AG04449 (cell line): ENCODE measurements at regions of chr11 and their contacts with region 1.

Region 1: DNA sequence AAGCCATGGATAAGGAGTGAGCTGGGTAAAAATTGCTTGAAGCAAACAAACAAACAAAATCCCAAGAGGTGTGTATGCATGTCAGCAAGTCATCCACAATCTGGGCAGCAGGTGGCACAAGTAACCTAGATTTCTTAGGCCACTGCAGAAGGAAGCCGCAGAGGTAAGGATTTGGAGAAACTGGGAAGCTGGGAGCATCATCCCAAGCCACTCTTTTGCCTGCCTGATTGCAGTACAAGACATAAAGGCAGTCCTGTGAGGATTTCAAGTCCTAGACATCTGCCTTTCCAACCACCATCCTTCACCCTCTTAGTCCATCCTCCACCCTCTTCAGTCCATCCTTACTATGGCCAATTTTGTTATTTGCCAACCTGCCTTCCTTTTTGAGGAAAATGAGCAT is 67.2 kb upstream of the BMAL1 start:
- DNase-seq: peak; percentile 34
- H3K4me3 ChIP-seq: no peak overlapping the region
- CTCF ChIP-seq: peak; percentile 63

Region 2: GRCh38 chr11:13238879-13239514 is 28.6 kb after region 1 on chr11:
- CTCF ChIA-PET with region 1: interaction called, 191 read pairs
- POLR2A ChIA-PET with region 1: no interaction called
- DNase-seq: no peak
- H3K4me3 ChIP-seq: no peak overlapping the region
- CTCF ChIP-seq: peak; percentile 67

Region 3: GRCh38 chr11:13329670-13330356 is 119.4 kb after region 1 on chr11:
- CTCF ChIA-PET with region 1: interaction called, 329 read pairs
- POLR2A ChIA-PET with region 1: no interaction called
- DNase-seq: no peak
- H3K4me3 ChIP-seq: no peak overlapping the region
- CTCF ChIP-seq: no peak

Region 4: DNA sequence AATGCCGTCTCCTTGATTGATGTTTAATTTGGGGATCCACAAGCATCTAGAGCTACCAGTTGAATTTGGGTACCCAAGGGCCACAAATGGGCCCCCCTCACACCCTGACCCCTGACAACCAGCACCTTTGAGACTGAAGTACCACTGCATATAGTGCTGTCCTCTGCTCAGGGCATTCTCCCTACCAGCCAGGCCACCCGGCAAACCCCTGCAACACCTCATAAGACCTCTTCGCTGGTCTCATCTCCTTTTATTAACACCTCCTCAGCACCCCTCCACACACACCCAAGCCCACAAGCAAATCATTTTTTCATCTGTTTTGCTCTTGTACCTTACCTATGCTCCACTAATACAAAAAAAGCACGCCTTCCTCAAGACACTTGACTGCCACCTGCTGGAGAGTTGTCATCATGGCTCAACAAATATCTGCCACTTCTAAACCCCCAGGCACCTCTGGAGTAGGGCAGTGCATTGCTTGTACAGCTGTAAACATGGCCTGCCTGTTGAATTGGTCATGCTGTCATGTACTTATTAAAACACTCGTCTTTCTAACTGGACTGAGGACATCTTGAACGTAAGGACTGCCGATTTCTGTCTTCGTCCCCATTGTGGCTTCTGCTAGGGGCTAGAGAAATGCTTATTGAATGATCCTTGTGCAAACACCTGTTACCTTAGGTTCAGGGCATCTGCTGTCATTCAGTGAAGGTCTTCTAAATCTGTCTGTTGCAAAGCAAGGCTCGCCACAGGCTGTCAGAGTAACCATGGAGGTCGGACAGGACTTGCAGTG is 133.7 kb after region 1 on chr11:
- CTCF ChIA-PET with region 1: interaction called, 329 read pairs
- POLR2A ChIA-PET with region 1: interaction called, 20 read pairs
- DNase-seq: no peak
- H3K4me3 ChIP-seq: no peak overlapping the region
- CTCF ChIP-seq: peak; percentile 70

Region 5: DNA sequence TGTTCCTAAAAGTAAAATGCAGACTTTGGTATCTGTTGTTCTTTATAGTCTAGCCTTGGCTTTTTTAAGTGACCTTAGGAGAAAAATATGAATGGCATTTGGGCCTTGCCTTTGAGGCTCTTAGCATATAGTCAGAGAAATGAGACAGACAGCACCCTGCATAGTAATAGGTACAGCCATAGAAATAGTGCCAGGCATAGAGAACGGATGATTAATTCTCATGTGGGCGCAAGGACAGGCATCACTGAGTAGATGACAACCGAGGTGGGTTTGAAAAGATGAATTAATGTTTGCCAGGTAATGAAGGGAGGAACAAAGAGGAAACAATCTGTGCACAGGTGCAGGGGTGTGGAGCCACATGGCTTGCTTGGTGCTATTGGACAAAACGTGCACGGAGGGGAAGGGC is 157.6 kb after region 1 on chr11:
- CTCF ChIA-PET with region 1: interaction called, 10 read pairs
- POLR2A ChIA-PET with region 1: no interaction called
- DNase-seq: peak; percentile 29
- H3K4me3 ChIP-seq: no peak overlapping the region
- CTCF ChIP-seq: no peak

Region 6: GRCh38 chr11:13462901-13463778 is 252.7 kb after region 1 on chr11 and contains the start of gene BTBD10:
- CTCF ChIA-PET with region 1: interaction called, 11 read pairs
- POLR2A ChIA-PET with region 1: no interaction called
- DNase-seq: peak; percentile 49
- H3K4me3 ChIP-seq: peak within 1 kb of the TSS; percentile 87
- CTCF ChIP-seq: no peak